CD4-positive, alpha-beta memory T cell (primary cell): ENCODE measurements at regions of chr2 and their contacts with region 1.

Region 1: GRCh38 chr2:69643602-69644505 is at the start of gene AAK1:
- DNase-seq: peak; percentile 82 to 90 (median 85)
- H3K4me3 ChIP-seq: peak within 1 kb of the TSS; percentile 91 to 95
- H3K4me3 Mint-ChIP-seq: peak within 1 kb of the TSS; percentile 92 to 99 (median 98)
- H3K27ac ChIP-seq: peak within 1 kb of the TSS; percentile 80
- H3K27ac Mint-ChIP-seq: peak within 1 kb of the TSS; percentile 95 to 99 (median 97)
- H3K4me1 ChIP-seq: peaks cover 68% of the 10 kb centered on the region
- H3K4me1 Mint-ChIP-seq: peaks cover 51 to 71% (median 60%) of the 10 kb centered on the region in 4 donors
- H3K27me3 ChIP-seq: no peaks in the 10 kb centered on the region
- H3K27me3 Mint-ChIP-seq: no peaks in the 10 kb centered on the region
- total RNA-seq, gene AAK1: 220 to 225 TPM

Region 2: GRCh38 chr2:69436938-69437750 is 206.7 kb before region 1 on chr2 and contains the start of gene NFU1:
- CTCF ChIA-PET with region 1: interaction called, 6 read pairs
- POLR2A ChIA-PET with region 1: interaction called, 25 read pairs
- intact Hi-C with region 1: loop called (anchors 1 kb)
- DNase-seq: peak; percentile 85 to 91 (median 89)
- H3K4me3 ChIP-seq: peak within 1 kb of the TSS; percentile 75 to 82
- H3K4me3 Mint-ChIP-seq: peak within 1 kb of the TSS; percentile 93 to 99 (median 98)
- H3K27ac ChIP-seq: peak within 1 kb of the TSS; percentile 91
- H3K27ac Mint-ChIP-seq: peak within 1 kb of the TSS; percentile 98 to 100 (median 99)
- H3K4me1 ChIP-seq: peaks cover 32% of the 10 kb centered on the region
- H3K4me1 Mint-ChIP-seq: peaks cover 26 to 48% (median 34%) of the 10 kb centered on the region in 4 donors
- H3K27me3 ChIP-seq: no peaks in the 10 kb centered on the region
- H3K27me3 Mint-ChIP-seq: no peaks in the 10 kb centered on the region
- total RNA-seq, gene NFU1: 23.9 to 27.0 TPM

Region 3: DNA sequence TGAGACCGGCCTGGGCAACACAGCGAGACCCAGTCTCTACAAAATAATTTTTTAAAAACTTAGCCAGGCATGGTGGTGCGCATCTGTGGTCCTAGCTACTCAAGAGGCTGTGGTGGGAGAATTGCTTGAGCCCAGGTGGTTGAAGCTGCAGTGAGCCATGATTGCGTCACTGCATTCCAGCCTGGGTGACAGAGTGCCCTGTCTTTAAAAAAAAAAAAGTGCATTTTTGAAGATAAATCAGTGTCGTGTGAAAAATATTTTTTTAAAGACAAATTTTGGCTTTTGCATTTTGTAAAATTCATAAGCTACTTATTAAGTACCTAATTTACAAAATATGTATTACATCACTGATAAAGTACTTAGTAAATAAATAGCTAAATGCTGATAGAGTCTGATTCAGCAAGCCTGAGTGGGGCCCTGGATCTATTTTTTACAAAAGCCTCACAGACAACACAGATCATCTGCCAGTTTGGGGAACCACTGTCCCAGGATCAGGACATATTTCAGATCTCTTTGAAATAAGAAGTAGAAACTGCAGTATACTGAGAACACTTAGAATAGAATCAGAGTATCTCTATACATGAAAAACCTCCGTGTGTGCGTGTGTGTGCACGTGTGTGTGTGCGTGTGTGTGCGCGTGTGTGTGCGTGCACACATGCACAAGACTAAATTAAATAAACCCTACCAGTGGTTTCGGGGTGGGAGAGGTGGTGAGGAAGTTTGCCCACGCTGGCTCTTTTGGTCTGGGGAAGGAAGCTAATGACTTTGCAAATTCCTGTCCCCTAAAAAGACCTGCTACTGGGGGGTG is 61.9 kb before region 1 on chr2:
- CTCF ChIA-PET with region 1: interaction called, 4 read pairs
- POLR2A ChIA-PET with region 1: interaction called, 22 read pairs
- intact Hi-C with region 1: no loop called
- DNase-seq: no peak
- H3K4me3 ChIP-seq: no peak overlapping the region
- H3K4me3 Mint-ChIP-seq: peak overlapping the region in 7 of 8 donors; percentile 51 to 81 (median 70)
- H3K27ac ChIP-seq: no peak overlapping the region
- H3K27ac Mint-ChIP-seq: peak overlapping the region; percentile 42 to 92 (median 86)
- H3K4me1 ChIP-seq: peaks cover 98% of the 10 kb centered on the region
- H3K4me1 Mint-ChIP-seq: peaks cover 80 to 95% (median 88%) of the 10 kb centered on the region in 4 donors
- H3K27me3 ChIP-seq: no peaks in the 10 kb centered on the region
- H3K27me3 Mint-ChIP-seq: no peaks in the 10 kb centered on the region

Region 4: GRCh38 chr2:69625078-69625795 is 18.6 kb before region 1 on chr2:
- CTCF ChIA-PET with region 1: interaction called, 20 read pairs
- POLR2A ChIA-PET with region 1: interaction called, 44 read pairs
- intact Hi-C with region 1: loop called (anchors 2 kb)
- DNase-seq: peak in 1 of 5 donors; percentile 14
- H3K4me3 ChIP-seq: no peak overlapping the region
- H3K4me3 Mint-ChIP-seq: no peak overlapping the region
- H3K27ac ChIP-seq: no peak overlapping the region
- H3K27ac Mint-ChIP-seq: no peak overlapping the region
- H3K4me1 ChIP-seq: peaks cover 90% of the 10 kb centered on the region
- H3K4me1 Mint-ChIP-seq: peaks cover 0 to 20% (median 14%) of the 10 kb centered on the region in 4 donors
- H3K27me3 ChIP-seq: no peaks in the 10 kb centered on the region
- H3K27me3 Mint-ChIP-seq: no peaks in the 10 kb centered on the region

Region 5: DNA sequence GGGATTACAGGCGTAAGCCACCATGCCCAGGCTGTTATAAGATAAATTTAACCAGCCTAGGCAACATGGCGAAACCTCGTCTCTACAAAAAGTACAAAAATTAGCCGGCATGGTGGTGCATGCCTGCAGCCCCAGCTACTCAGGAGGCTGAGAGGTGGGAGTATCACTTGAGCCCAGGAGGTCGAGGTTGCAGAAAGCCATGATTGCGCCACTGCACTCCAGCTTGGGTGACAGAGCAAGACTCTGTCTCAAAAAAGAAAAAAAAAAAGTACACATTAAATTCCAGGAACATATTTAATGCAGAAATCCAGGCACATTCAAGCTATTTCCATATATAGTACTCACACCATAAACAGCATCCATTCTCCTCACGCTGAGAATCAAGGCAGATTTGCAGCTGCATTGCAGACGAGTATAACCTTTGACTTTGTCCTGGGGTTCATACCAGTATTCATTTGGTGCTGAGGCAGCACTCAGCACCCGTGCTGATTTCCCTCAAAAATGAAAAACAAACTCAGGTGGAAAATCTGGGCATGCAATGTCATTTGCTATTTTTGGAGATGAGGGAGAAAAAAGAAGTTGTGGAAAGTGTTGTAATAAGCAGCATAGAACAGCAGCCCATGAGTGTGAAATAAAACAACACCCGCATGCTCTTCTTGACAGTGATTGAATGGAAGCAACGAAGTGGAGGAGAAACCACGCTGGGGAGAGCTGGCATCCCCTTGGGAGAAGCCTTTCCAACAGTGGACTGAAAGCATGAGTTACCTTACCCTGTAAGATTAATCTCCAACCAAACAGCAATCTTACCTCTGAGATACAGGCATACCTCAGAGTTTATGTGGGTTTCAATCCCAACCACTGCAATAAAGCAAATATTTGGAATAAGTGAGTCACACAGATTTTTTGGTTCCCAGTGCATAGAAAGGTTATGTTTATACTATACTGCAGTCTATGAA is 51.3 kb after region 1 on chr2:
- CTCF ChIA-PET with region 1: interaction called, 14 read pairs
- POLR2A ChIA-PET with region 1: interaction called, 217 read pairs
- intact Hi-C with region 1: loop called (anchors 1 kb)
- DNase-seq: no peak
- H3K4me3 ChIP-seq: no peak overlapping the region
- H3K4me3 Mint-ChIP-seq: peak overlapping the region in 6 of 8 donors; percentile 5 to 75 (median 61)
- H3K27ac ChIP-seq: no peak overlapping the region
- H3K27ac Mint-ChIP-seq: peak overlapping the region; percentile 47 to 97 (median 77)
- H3K4me1 ChIP-seq: peaks cover 88% of the 10 kb centered on the region
- H3K4me1 Mint-ChIP-seq: peaks cover 70 to 95% (median 80%) of the 10 kb centered on the region in 4 donors
- H3K27me3 ChIP-seq: no peaks in the 10 kb centered on the region
- H3K27me3 Mint-ChIP-seq: no peaks in the 10 kb centered on the region

Region 6: DNA sequence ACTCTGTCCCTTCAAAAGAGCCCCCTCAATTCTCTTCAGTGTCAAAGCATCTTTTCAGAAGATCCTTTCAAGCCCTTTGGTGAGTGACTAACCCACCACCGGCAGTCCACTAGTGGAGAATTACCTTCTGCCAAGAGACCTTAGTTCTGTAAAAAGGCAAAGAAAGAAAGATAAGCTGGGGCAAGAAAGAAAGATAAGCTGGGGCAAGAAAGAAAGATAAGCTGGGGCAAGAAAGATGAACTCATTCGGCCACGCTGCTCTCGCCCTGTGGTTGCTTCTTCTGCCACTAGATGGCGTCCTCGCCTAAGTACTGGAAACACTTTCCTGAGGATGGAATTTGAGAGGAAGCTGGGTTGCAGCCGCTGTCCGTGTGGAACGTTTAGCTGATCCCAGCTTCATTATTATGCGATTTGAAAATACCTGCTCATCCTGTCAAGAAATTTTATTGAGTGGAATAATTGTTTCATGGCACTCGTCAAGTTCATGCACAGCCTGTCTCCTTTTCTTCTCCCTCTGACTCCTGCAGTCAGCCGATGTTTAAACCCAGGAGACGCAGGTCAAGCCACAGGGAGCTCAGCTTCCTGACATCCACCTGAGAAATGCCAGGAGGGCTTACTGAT is 80.8 kb after region 1 on chr2:
- CTCF ChIA-PET with region 1: interaction called, 22 read pairs
- POLR2A ChIA-PET with region 1: interaction called, 22 read pairs
- intact Hi-C with region 1: no loop called
- DNase-seq: peak; percentile 74 to 80 (median 77)
- H3K4me3 ChIP-seq: no peak overlapping the region
- H3K4me3 Mint-ChIP-seq: peak overlapping the region in 7 of 8 donors; percentile 38 to 70 (median 60)
- H3K27ac ChIP-seq: no peak overlapping the region
- H3K27ac Mint-ChIP-seq: no peak overlapping the region
- H3K4me1 ChIP-seq: peaks cover 7% of the 10 kb centered on the region
- H3K4me1 Mint-ChIP-seq: peaks cover 4 to 7% (median 6%) of the 10 kb centered on the region in 4 donors
- H3K27me3 ChIP-seq: no peaks in the 10 kb centered on the region
- H3K27me3 Mint-ChIP-seq: no peaks in the 10 kb centered on the region

Region 7: GRCh38 chr2:69754633-69755032 is 110.8 kb after region 1 on chr2:
- CTCF ChIA-PET with region 1: no interaction called
- POLR2A ChIA-PET with region 1: no interaction called
- intact Hi-C with region 1: no loop called
- DNase-seq: no peak
- H3K4me3 ChIP-seq: no peak overlapping the region
- H3K4me3 Mint-ChIP-seq: peak overlapping the region in 6 of 8 donors; percentile 25 to 61 (median 47)
- H3K27ac ChIP-seq: no peak overlapping the region
- H3K27ac Mint-ChIP-seq: peak overlapping the region in 6 of 7 donors; percentile 11 to 68 (median 42)
- H3K4me1 ChIP-seq: peaks cover 15% of the 10 kb centered on the region
- H3K4me1 Mint-ChIP-seq: peaks cover 11 to 32% (median 12%) of the 10 kb centered on the region in 4 donors
- H3K27me3 ChIP-seq: no peaks in the 10 kb centered on the region
- H3K27me3 Mint-ChIP-seq: no peaks in the 10 kb centered on the region

Region 8: DNA sequence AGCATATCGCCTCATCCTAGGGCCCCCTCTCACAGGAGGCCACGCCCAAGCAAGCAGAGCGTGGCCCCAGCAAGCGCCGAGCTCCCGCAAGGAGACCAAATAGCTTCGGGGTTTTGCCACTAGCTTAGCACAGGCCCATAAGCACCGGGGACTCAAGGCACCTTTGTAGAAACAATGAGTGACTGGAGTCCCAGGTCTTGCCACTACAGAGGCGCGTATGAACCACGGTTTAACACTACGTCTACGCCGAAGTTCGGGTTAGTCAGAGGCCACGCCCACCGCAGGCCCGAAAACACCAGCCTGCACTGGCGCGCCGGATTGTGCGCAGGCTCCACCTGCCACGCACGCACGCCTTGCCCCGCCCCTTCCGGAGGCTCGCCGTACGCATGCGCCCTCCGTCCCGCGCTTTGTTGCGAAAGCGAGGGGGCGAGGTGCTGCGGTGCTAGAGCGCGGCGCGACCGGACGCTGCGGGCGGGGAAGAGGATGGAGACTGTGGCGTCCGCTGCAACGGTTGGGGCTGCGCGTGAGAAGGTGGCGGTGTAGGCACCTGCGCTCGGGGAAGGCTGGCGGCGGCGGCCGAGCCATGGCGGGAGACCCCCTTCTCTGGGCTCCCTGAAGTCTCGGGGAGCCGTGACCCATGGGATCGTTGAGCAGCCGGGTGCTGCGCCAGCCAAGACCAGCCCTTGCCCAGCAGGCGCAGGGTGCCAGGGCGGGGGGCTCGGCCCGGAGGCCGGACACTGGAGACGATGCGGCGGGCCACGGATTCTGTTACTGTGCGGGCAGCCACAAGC is 185.6 kb after region 1 on chr2 and contains the start of gene GMCL1:
- CTCF ChIA-PET with region 1: no interaction called
- POLR2A ChIA-PET with region 1: interaction called, 8 read pairs
- intact Hi-C with region 1: loop called (anchors 1 kb)
- DNase-seq: peak; percentile 98 to 99 (median 99)
- H3K4me3 ChIP-seq: peak within 1 kb of the TSS; percentile 54 to 71
- H3K4me3 Mint-ChIP-seq: peak within 1 kb of the TSS; percentile 87 to 98 (median 96)
- H3K27ac ChIP-seq: peak within 1 kb of the TSS; percentile 92
- H3K27ac Mint-ChIP-seq: peak within 1 kb of the TSS; percentile 93 to 98 (median 96)
- H3K4me1 ChIP-seq: peaks cover 42% of the 10 kb centered on the region
- H3K4me1 Mint-ChIP-seq: peaks cover 21 to 69% (median 43%) of the 10 kb centered on the region in 4 donors
- H3K27me3 ChIP-seq: no peaks in the 10 kb centered on the region
- H3K27me3 Mint-ChIP-seq: no peaks in the 10 kb centered on the region
- total RNA-seq, gene GMCL1: 28.2 to 31.8 TPM